Activated CD8-positive, alpha-beta memory T cell treated with anti-CD3 and anti-CD28 coated beads, Interleukin-2, amount 10 ng/mL, durations not matched to agents 7 days and 5 days (primary cell): ENCODE measurements at regions of chr1 and their contacts with region 1.

Region 1: DNA sequence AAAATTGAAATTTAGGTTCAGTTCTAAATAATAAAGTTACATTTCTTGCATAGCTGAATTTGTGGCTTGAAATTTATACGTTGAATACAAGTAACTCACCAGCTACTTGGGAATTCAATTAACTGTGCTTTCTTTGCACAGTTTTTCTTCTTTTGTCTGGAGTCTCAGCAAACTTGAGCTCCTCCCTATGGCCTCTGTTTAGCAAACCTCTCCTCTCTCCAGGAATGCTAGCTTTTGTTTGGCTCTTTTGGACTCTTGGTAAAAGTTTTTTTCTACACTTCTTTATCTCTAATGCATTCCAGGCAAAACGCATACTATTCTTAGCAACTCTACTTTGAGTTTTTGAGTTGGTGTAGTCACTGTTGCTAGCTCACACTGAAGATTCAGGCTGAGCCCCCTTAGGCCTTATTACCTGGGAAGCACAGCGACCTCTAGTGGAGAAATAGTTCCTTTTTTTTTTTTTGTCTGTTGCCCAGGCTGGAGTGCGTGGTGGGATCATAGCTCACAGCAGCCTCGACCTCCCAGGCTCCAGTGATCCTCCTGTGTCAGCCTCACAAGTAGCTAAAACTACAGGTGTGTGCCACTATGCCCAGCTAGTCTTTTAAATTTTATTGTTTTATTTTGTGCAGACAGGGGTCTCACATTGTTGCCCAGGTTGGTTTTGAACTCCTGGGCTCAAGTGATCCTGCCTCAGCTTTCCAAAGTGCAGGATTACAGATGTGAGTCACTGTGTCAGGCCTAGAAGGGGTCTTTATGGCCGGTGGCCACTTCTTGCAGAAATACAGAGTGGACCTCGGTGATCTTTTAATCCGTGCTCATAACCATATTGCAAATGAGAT is 61.7 kb downstream of the CASQ2 start:
- DNase-seq: no peak
- ATAC-seq: peak; percentile 45
- H3K4me3 Mint-ChIP-seq: no peak overlapping the region
- H3K27ac Mint-ChIP-seq: no peak overlapping the region
- H3K4me1 Mint-ChIP-seq: no peaks in the 10 kb centered on the region
- H3K27me3 Mint-ChIP-seq: peaks cover 18% of the 10 kb centered on the region

Region 2: GRCh38 chr1:115609021-115609420 is 97.8 kb before region 1 on chr1:
- CTCF ChIA-PET with region 1: interaction called, 41 read pairs
- DNase-seq: no peak
- ATAC-seq: no peak
- H3K4me3 Mint-ChIP-seq: no peak overlapping the region
- H3K27ac Mint-ChIP-seq: no peak overlapping the region
- H3K4me1 Mint-ChIP-seq: no peaks in the 10 kb centered on the region
- H3K27me3 Mint-ChIP-seq: peaks cover 15% of the 10 kb centered on the region

Region 3: GRCh38 chr1:115660151-115660550 is 46.7 kb before region 1 on chr1:
- CTCF ChIA-PET with region 1: interaction called, 12 read pairs
- DNase-seq: no peak
- ATAC-seq: no peak
- H3K4me3 Mint-ChIP-seq: no peak overlapping the region
- H3K27ac Mint-ChIP-seq: no peak overlapping the region
- H3K4me1 Mint-ChIP-seq: peaks cover 13% of the 10 kb centered on the region
- H3K27me3 Mint-ChIP-seq: no peaks in the 10 kb centered on the region

Region 4: DNA sequence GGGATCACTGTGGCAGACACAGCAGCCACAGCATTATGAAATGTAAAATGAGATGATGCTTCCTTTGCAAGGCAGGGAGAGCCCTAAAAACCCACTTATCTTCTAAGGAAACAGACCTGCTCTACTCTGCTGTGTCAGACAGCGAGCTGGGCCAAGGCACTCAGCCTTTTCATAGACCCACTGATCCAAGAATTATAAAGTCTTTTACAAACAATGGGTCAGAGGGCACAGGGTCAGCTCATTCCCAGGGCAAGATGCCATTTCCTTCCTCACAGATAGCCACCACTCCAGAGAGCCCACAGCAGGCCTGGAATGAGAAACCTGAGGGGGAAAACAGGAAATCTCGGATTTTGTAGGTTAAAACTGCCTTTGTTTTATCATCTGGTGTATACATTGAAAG is 18.8 kb after region 1 on chr1:
- CTCF ChIA-PET with region 1: no interaction called
- DNase-seq: no peak
- ATAC-seq: no peak
- H3K4me3 Mint-ChIP-seq: no peak overlapping the region
- H3K27ac Mint-ChIP-seq: no peak overlapping the region
- H3K4me1 Mint-ChIP-seq: no peaks in the 10 kb centered on the region
- H3K27me3 Mint-ChIP-seq: peaks cover 13% of the 10 kb centered on the region

Region 5: GRCh38 chr1:115744646-115745275 is 38.0 kb after region 1 on chr1:
- CTCF ChIA-PET with region 1: no interaction called
- DNase-seq: no peak
- ATAC-seq: no peak
- H3K4me3 Mint-ChIP-seq: no peak overlapping the region
- H3K27ac Mint-ChIP-seq: no peak overlapping the region
- H3K4me1 Mint-ChIP-seq: no peaks in the 10 kb centered on the region
- H3K27me3 Mint-ChIP-seq: peaks cover 11% of the 10 kb centered on the region